ENCODE measurements at regions of chr1 and their contacts with region 1.

Region 1: GRCh38 chr1:29297450-29297849 is 61.1 kb downstream of the PTPRU start:
- DNase-seq: no peak
- ATAC-seq: no peak
- H3K4me3 ChIP-seq: no peak overlapping the region
- H3K27ac ChIP-seq: no peak overlapping the region
- H3K4me1 ChIP-seq: no peaks in the 10 kb centered on the region
- H3K27me3 ChIP-seq: no peaks in the 10 kb centered on the region
- CTCF ChIP-seq: no peak
- POLR2A ChIP-seq: no peak

Region 2: DNA sequence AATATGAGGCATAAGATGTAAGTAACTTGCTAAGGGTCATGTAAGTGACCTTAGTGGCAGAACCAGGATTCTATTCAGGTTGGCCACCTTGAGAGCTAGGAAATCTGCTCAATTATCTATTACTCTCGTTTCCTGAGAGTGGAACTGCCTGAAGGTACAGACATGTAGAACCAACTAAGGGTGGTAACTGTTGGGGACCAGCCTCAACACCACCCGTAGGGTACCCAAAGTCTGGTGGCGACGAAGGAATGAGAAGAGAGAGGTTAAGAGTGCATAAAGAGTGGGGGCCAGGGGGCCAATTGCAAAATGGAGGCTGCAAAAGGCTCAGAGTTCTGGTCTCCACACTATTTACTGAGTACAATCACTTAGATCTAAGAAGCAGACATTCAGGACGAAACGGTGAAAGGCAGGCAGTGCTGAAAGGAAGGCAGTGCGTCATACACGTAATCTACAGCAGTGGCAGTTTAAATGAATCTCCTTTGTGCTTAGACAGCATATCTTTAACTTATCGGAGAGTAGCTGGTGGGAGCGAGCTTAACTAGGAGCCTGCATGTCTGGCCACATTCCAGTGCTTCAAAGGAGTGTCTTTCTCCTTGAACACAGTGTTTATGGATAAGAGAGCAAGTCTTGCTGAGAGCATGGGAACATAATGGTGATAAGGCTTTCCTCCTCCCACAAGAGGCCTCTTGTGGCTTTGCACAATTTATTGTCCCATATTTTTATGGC is 140.7 kb before region 1 on chr1:
- in situ Hi-C with region 1: no loop called
- intact Hi-C with region 1: loop called (anchors 5 kb)
- DNase-seq: no peak
- ATAC-seq: no peak
- H3K4me3 ChIP-seq: no peak overlapping the region
- H3K27ac ChIP-seq: peak overlapping the region in 3 of 4 donors; percentile 10 to 38 (median 11)
- H3K4me1 ChIP-seq: peaks cover 3 to 26% of the 10 kb centered on the region in 2 donors
- H3K27me3 ChIP-seq: no peaks in the 10 kb centered on the region
- CTCF ChIP-seq: no peak
- POLR2A ChIP-seq: no peak